Right ventricle myocardium inferior (tissue), 1 donor: ENCODE measurements at regions of chr16 and their contacts with region 1.

Region 1: DNA sequence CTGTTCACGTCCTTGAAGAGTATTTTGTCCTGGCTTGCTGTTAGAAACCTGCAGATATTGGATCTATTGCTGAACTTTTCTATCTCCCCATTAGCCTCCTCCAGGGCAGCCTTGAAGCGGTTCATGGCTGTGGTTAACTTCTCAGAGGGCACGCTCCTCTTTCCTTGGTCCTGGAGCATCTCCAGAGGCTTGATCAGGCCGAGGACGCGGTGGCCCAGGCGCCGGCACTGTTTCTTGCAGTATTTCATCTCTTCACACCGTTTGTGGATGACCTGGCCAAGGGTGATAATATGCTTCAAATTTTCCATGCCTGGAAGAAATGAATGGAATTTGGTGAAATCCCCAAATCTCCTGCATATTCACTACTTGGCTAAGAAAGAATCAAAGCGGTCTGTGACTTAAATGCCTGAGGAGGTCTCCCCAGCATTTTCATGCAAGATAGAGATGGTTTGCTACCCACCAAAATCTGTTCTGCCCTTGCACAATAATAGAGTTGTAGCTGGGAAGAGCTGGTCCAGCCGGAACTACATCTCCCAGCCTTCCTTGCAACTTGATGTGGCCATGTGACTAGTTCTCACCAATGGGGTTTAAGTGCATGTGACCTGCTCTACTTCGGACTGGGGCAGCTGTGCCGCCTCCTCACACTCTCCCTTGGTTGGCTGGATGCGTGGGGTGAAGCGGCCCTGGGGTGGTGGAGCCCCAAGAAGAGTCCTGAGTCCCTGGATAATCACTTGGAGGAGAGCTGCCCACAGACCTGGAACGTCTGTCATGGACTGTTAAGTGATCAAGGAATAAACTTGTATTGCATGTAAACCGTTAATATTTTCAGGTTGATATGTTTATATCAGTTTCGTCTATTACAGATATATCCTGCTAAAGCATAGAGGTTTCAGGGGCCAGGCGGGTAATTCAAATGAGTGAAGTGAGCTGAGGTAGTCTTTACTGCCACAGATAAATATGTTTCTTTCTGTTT is 4.9 kb downstream of the MLKL start:
- DNase-seq: peak; percentile 89
- ATAC-seq: peak; percentile 97

Region 2: GRCh38 chr16:74666425-74667254 is 29.1 kb before region 1 on chr16 and contains the start of gene RFWD3:
- intact Hi-C with region 1: loop called (anchors 2 kb)
- DNase-seq: peak; percentile 97
- ATAC-seq: peak; percentile 100
- total RNA-seq, gene RFWD3: 4.5 TPM

Region 3: GRCh38 chr16:74868501-74868900 is 172.8 kb after region 1 on chr16:
- intact Hi-C with region 1: no loop called
- DNase-seq: no peak
- ATAC-seq: no peak